ENCODE measurements at regions of chr18 and their contacts with region 1.

Region 1: DNA sequence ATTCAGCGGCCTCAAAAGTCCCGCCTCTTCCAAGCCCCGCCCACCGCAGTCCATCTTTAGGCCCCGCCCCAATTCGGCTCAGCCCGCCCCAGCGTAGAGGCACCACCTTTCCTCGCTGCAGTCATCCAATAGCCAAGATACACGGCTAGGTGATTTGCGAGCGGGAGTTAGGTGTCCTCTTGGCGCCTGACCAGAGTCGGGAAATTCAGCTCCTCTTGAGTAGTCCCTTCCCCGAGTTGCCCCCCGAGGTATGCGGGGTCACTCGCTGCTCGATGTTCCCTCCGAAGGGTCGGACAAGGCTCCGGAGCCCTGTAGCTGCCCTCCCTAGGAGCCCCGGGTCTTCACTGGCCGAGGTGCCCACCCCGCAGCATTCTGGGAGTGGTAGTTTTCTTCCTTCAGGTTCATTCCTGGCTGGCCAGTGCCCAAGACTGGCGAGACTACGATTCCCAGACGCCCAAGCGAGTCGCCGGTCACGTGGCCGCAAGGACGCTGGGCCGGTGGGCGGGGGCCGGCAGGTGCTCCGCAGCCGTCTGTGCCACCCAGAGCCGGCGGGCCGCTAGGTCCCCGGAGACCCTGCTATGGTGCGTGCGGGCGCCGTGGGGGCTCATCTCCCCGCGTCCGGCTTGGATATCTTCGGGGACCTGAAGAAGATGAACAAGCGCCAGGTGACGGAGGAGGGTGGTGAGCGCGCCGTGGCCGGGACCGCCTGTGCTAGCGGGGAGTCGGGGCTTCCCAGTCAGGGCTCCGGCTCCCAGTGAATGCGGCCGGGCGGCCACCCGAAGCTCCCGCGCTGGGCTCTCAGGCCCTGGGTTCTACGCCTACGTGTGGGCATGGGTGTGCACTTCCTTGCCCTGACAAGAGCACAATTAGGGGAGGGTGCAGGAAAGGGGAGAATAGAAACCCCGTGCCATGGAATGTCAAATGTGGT is at the start of gene SEC11C:
- DNase-seq: peak; percentile 97
- H3K4me3 Mint-ChIP-seq: peak within 1 kb of the TSS; percentile 96
- H3K27ac Mint-ChIP-seq: peak within 1 kb of the TSS; percentile 98
- H3K4me1 Mint-ChIP-seq: peaks cover 16% of the 10 kb centered on the region
- H3K27me3 Mint-ChIP-seq: peaks cover 41% of the 10 kb centered on the region
- CTCF ChIP-seq: no peak
- total RNA-seq, gene SEC11C: 101 and 106 TPM in 2 replicates

Region 2: DNA sequence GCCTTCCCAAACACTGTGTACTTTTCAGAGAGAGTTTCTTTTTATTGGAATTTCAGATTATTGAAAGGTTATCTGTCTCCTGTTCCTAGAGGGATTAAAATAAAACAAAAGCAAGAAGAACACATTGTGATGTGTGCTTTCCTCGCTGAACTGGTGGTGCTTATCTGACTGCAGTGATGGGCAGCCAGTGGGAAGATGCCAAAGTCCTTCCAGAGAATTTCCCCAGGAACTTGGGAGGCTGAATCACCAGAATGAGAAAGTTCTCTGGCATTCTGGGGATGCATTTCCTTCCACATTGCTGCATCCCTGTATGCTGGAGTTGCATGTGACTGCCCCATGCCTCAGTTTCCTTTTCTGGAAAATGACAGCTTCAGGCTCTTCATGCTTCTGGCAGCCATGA is 53.8 kb before region 1 on chr18:
- CTCF ChIA-PET with region 1: interaction called, 12 read pairs
- intact Hi-C with region 1: no loop called
- DNase-seq: no peak
- H3K4me3 Mint-ChIP-seq: no peak overlapping the region
- H3K27ac Mint-ChIP-seq: no peak overlapping the region
- H3K4me1 Mint-ChIP-seq: peaks cover 11% of the 10 kb centered on the region
- H3K27me3 Mint-ChIP-seq: peaks cover 74% of the 10 kb centered on the region
- CTCF ChIP-seq: no peak

Region 3: DNA sequence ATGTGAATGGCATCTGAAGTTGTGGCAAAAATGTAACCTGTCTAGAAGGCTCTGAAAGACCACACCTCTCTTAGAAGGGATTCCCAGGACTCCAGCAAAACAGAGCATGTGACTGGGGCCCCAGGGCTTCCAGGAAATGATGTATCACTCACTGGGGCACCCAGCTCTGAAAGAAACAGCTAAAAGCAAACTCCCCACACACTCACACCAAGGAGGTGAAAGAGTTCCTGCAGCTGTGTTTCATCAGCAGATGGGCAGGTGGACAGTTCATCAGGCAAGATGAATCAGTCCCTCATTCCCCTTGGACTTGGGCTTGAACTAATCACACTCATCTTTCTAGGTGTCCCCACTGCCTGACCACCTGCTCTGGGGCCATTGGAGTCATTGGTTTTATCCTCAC is 481.4 kb after region 1 on chr18:
- CTCF ChIA-PET with region 1: no interaction called
- intact Hi-C with region 1: no loop called
- DNase-seq: no peak
- H3K4me3 Mint-ChIP-seq: no peak overlapping the region
- H3K27ac Mint-ChIP-seq: no peak overlapping the region
- H3K4me1 Mint-ChIP-seq: no peaks in the 10 kb centered on the region
- H3K27me3 Mint-ChIP-seq: peaks cover 76% of the 10 kb centered on the region
- CTCF ChIP-seq: no peak

Region 4: DNA sequence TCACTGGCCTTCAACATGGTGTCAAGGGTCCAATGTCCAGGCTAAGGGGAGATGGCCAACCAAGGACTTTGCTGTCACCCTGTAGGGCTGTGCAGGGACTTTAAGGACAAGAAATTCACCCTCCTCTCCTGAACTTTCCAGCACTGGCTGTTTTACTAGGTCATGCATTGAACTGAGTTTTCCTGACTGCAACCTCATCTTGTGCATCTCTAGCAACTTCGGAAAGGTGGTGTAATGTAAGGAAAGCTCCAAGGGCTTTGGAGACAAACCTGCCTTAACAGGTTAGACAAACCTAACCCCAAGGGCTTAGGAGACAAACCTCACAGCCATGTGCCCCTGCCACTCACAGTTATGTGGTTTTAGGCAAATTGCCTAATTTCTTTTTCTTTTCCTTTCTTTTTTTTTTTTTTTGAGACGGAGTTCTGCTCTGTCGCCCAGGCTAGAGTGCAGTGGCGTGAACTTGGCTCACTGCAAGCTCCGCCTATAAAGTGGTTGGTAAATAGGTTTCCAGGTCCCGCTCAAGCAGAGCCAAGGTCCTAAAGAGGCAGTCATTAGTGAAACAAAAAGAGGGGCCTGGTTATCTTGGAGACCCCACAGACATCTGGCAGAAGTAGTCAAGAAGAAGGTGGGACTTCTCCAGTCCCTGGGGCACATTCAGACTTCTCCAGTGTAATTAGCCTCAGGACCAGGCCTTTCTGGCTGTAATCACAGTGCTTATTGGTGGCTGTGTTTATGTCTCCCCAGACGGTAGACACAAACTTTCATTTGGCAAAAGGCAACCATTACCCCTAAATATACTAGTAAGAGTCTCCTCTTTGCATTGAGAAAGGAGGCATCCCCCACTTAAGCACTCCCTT is 722.6 kb after region 1 on chr18:
- CTCF ChIA-PET with region 1: no interaction called
- intact Hi-C with region 1: no loop called
- DNase-seq: no peak
- H3K4me3 Mint-ChIP-seq: no peak overlapping the region
- H3K27ac Mint-ChIP-seq: no peak overlapping the region
- H3K4me1 Mint-ChIP-seq: peaks cover 26% of the 10 kb centered on the region
- H3K27me3 Mint-ChIP-seq: no peaks in the 10 kb centered on the region
- CTCF ChIP-seq: no peak

Measured in Calu3 (cell line).